K562 (cell line): ENCODE measurements at regions of chr1 and their contacts with region 1.

Region 1: GRCh38 chr1:179066471-179066870 is 15.4 kb upstream of the TOR3A start:
- DNase-seq: no peak
- ATAC-seq: no peak
- H3K4me3 ChIP-seq: no peak overlapping the region
- H3K27ac ChIP-seq: no peak overlapping the region
- H3K4me1 ChIP-seq: peaks cover 1 to 3% of the 10 kb centered on the region in 2 experiments
- H3K27me3 ChIP-seq: no peaks in the 10 kb centered on the region
- CTCF ChIP-seq: no peak
- EP300 ChIP-seq: no peak
- POLR2A ChIP-seq: no peak
- RAD21 ChIP-seq: no peak

Region 2: DNA sequence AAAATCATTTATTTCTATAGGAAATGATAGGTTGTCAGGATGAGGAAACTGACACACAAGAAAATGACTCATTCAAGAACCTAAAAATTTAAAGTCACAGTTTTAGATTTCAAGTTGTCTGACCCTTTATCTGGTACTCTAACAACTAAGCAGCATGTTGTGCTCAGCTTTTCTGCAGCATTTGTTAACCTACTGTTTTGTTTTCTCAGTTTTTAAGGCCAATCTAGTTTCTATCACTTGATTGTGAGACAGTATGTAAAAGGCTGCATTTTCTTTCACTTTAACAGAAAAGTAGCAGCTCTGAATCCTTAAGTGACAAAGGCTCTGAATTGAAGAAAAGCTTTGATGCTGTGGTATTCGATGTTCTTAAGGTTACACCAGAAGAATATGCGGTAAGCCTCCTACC is 282.3 kb before region 1 on chr1:
- CTCF ChIA-PET with region 1: no interaction called
- POLR2A ChIA-PET with region 1: no interaction called
- in situ Hi-C with region 1: no loop called
- intact Hi-C with region 1: loop called (anchors 5 kb)
- DNase-seq: no peak
- ATAC-seq: no peak
- H3K4me3 ChIP-seq: no peak overlapping the region
- H3K27ac ChIP-seq: no peak overlapping the region
- H3K4me1 ChIP-seq: no peaks in the 10 kb centered on the region
- H3K27me3 ChIP-seq: 0 out of 5 replicates have a peak, but pooled peaks cover 0 to 3% of the 10 kb centered on the region in 2 experiments
- CTCF ChIP-seq: no peak
- EP300 ChIP-seq: no peak
- POLR2A ChIP-seq: no peak
- RAD21 ChIP-seq: no peak